Sigmoid colon (tissue), 7 donors: ENCODE measurements at regions of chr11 and their contacts with region 1.

Region 1: DNA sequence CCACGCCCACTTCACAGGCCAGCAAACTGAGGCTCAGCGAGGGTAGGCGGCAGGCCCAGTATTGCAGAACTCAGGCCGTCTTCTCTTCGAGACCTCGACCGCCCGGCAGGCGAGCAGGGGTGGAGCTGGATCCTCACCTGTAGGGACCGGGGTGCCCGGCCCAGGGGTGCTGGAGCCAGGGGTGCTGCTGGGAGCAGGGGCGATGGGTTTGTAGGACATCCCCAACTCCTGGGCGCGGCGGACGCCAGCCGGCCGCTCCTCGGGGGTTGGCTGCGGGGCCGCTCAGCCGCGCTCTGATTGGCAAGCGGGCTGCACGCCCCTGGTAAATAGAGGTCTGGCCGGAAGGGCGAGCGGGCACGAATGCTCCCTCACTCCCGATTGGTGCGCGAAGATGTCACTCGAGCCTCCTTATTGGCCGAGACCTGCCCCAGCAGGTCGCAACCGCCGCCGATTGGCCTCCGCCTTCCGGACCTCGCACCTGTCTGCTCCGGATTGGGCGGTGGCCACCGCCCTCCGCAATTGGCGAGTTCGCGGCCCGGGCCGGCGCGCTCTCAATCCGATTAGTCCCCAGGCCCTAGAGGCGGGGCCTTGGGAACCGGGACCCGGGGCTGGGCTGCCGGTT is at the start of gene CDK2AP2:
- DNase-seq: peak; percentile 100
- H3K4me3 ChIP-seq: peak within 1 kb of the TSS; percentile 66 to 81 (median 76)
- H3K27ac ChIP-seq: peak within 1 kb of the TSS; percentile 96 to 99 (median 97)
- H3K4me1 ChIP-seq: peaks cover 0 to 57% (median 48%) of the 10 kb centered on the region in 4 donors
- H3K27me3 ChIP-seq: peaks cover 9 to 31% (median 26%) of the 10 kb centered on the region in 3 donors
- CTCF ChIP-seq: no peak
- EP300 ChIP-seq: no peak
- POLR2A ChIP-seq: peak; percentile 71 to 93
- total RNA-seq, gene CDK2AP2: 13.3 to 32.9 (median 23.7) TPM

Region 2: DNA sequence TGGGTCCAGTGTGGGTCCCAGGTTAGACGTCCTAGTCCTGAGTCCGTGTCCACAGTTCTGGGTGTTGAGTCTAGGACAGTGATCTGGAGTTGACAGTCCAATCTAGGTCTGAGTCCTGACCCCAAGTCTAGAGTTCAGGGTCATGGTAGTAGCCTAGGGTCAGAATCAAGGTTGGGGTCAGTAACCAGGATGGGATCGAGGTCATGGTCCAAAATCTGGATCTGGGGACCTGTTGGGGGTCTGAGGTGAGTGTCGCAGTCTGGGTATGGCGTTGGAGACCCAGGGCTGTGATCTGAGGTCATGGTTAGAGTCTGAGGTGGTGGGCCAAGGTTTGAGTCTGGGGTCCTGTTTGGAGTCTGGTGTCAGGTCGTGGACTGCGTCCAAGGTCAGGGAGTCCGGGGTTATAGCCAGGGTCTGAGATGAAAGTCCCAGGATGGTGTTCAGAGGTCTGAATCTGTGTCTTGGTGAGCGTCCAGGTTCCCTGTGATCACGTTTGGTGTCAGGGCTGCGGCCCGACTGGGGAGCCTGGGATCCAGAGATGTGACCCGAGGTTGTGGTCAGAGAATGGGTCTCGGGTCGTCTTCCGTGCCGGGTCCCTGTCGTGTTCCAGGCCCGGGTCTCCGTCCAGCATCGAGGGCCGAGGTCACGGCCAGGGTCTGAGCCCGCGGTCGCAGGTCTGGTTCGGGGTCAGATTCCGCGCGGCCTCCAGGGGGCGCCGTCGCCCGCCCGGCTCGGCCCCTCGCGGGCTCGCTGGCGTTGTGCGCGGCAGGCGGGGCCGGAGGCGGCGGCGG is 242.1 kb before region 1 on chr11:
- intact Hi-C with region 1: loop called (anchors 5 kb)
- DNase-seq: peak; percentile 88
- H3K4me3 ChIP-seq: peak overlapping the region in 3 of 4 donors; percentile 5 to 25 (median 24)
- H3K27ac ChIP-seq: peak overlapping the region; percentile 72 to 80 (median 76)
- H3K4me1 ChIP-seq: peaks cover 0 to 71% (median 67%) of the 10 kb centered on the region in 4 donors
- H3K27me3 ChIP-seq: no peaks in the 10 kb centered on the region
- CTCF ChIP-seq: peak; percentile 60 to 70 (median 64)
- EP300 ChIP-seq: no peak
- POLR2A ChIP-seq: no peak

Region 3: GRCh38 chr11:67401495-67402191 is 106.3 kb before region 1 on chr11 and contains the start of gene PPP1CA:
- intact Hi-C with region 1: loop called (anchors 1 kb)
- DNase-seq: peak; percentile 95
- H3K4me3 ChIP-seq: peak within 1 kb of the TSS; percentile 74 to 84 (median 76)
- H3K27ac ChIP-seq: peak within 1 kb of the TSS; percentile 92 to 93 (median 92)
- H3K4me1 ChIP-seq: peaks cover 0 to 43% (median 36%) of the 10 kb centered on the region in 4 donors
- H3K27me3 ChIP-seq: peaks cover 0 to 31% (median 12%) of the 10 kb centered on the region in 3 donors
- CTCF ChIP-seq: peak in 2 of 4 experiments; percentile 11 to 48
- EP300 ChIP-seq: no peak
- POLR2A ChIP-seq: peak in 1 of 2 donors; percentile 70
- total RNA-seq, gene PPP1CA: 59.5 to 87.0 (median 80.0) TPM

Region 4: GRCh38 chr11:67468835-67469811 is 38.9 kb before region 1 on chr11 and contains the start of gene TMEM134:
- intact Hi-C with region 1: loop called (anchors 2 kb)
- DNase-seq: peak; percentile 97
- H3K4me3 ChIP-seq: peak within 1 kb of the TSS; percentile 90 to 96 (median 93)
- H3K27ac ChIP-seq: peak within 1 kb of the TSS; percentile 91 to 95 (median 92)
- H3K4me1 ChIP-seq: peaks cover 0 to 45% (median 33%) of the 10 kb centered on the region in 4 donors
- H3K27me3 ChIP-seq: no peaks in the 10 kb centered on the region
- CTCF ChIP-seq: peak in 1 of 4 experiments; percentile 41
- EP300 ChIP-seq: no peak
- POLR2A ChIP-seq: peak; percentile 74 to 86
- total RNA-seq, gene TMEM134: 54.6 to 137 (median 121) TPM

Region 5: GRCh38 chr11:67583247-67584204 is 75.6 kb after region 1 on chr11 and contains the start of gene GSTP1:
- intact Hi-C with region 1: loop called (anchors 5 kb)
- DNase-seq: peak; percentile 97
- H3K4me3 ChIP-seq: peak within 1 kb of the TSS; percentile 74 to 96 (median 80)
- H3K27ac ChIP-seq: peak within 1 kb of the TSS; percentile 95 to 99 (median 97)
- H3K4me1 ChIP-seq: peaks cover 0 to 25% (median 16%) of the 10 kb centered on the region in 4 donors
- H3K27me3 ChIP-seq: no peaks in the 10 kb centered on the region
- CTCF ChIP-seq: peak in 3 of 4 experiments; percentile 39 to 80 (median 51)
- EP300 ChIP-seq: peak in 1 of 4 donors; percentile 23
- POLR2A ChIP-seq: peak; percentile 91 to 92
- total RNA-seq, gene GSTP1: 349 to 702 (median 499) TPM